ENCODE measurements at regions of chr21 and their contacts with region 1.

Region 1: GRCh38 chr21:15064576-15065391 is at the start of gene NRIP1:
- DNase-seq: peak; percentile 65
- H3K4me3 ChIP-seq: peak within 1 kb of the TSS; percentile 81
- H3K27ac ChIP-seq: peak within 1 kb of the TSS; percentile 79
- H3K27me3 ChIP-seq: no peaks in the 10 kb centered on the region
- CTCF ChIP-seq: no peak
- polyA plus RNA-seq, gene NRIP1: 18.7 and 22.6 TPM in 2 replicates

Region 2: DNA sequence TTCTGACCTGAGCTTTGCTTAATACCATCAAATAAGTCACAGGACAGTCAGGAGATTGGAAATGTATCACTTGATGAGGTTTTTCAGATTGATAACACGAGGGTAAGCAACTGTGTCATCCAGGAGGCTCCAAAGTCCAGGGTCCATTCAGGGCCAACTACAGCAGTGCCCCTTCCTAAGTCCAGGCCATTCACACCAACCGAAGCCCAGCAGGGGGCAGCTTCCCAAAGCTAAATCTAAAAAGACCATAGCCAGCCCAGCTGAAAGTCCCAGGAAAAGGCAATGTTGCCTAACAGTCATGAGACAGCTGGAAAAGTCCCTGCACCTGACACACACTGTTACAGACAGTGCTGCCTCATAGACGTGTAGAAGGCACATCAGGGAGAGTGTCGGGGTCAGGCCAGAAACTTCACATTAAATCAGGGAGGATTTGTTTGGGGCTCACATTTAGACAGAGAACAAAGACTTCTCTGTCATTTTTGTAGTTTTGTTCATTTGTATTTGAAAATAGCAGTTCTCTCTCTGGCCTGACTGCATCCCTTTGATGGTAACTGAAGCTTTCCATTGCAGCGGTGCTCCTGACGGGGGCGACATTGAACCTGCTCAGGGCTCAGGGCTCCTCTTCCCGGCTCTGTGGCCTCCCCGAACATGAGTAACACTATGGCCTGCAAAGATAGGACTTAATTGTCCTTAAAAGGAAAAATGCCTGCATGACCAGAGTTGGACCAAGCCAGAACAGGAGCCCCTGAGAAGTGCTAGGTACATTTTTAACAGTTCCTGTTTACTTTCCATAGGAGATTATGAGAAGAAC is 200.4 kb before region 1 on chr21:
- CTCF ChIA-PET with region 1: interaction called, 10 read pairs
- POLR2A ChIA-PET with region 1: no interaction called
- DNase-seq: peak; percentile 42
- H3K4me3 ChIP-seq: no peak overlapping the region
- H3K27ac ChIP-seq: no peak overlapping the region
- H3K27me3 ChIP-seq: no peaks in the 10 kb centered on the region
- CTCF ChIP-seq: peak; percentile 76

Region 3: DNA sequence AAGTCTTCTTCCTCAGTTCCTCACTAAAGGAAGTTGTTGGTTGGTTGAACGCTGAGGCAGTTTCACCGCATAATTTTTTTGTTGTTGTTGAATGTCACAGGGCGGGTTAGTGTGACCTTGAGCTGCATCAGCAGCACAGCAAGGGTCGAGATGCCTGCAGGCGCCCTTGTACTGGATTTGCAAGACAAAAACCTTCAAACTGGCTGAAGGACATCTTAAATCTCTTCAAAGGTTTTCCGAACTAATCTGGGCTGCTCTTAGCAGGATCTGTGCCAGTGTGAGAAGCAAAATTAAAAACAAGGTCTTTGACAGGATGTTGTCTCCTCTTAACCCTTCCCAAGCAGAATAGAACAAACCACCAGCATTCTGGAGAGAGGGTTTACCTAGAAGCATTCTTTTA is 59.4 kb before region 1 on chr21:
- CTCF ChIA-PET with region 1: no interaction called
- POLR2A ChIA-PET with region 1: interaction called, 14 read pairs
- DNase-seq: no peak
- H3K4me3 ChIP-seq: peak overlapping the region; percentile 41
- H3K27ac ChIP-seq: peak overlapping the region; percentile 89
- H3K27me3 ChIP-seq: no peaks in the 10 kb centered on the region
- CTCF ChIP-seq: no peak

Measured in AG04450 (cell line).